Common myeloid progenitor, CD34-positive (primary cell): ENCODE measurements at regions of chr9 and their contacts with region 1.

Region 1: GRCh38 chr9:90827181-90827871 is 25.7 kb downstream of the SYK start:
- DNase-seq: peak; percentile 64 to 91 (median 86)
- H3K4me3 ChIP-seq: peak overlapping the region in 5 of 7 experiments; percentile 29 to 56 (median 46)
- H3K27ac ChIP-seq: peak overlapping the region in 1 of 2 experiments; percentile 50
- H3K4me1 ChIP-seq: peaks cover 27 to 49% (median 43%) of the 10 kb centered on the region in 4 experiments
- H3K27me3 ChIP-seq: no peaks in the 10 kb centered on the region

Region 2: DNA sequence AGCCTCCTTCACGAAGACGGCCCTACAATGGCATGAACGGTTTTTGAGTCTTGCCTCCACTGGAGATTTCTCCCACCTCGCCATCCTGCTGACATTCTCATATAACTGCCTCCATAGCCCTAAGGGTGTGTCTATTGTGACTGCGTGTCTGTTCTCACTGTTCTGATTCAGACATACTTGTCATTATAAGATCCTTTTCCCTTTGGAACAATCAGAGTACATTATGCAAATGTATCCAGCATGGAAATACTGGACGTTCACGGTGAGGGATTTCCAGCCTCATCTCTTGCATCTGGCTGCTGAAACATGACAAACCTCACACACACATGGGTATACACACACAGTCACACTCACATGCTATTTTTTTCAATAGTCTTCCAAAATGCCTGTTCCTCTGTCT is 586.8 kb before region 1 on chr9:
- CTCF ChIA-PET with region 1: no interaction called
- POLR2A ChIA-PET with region 1: no interaction called
- DNase-seq: no peak
- H3K4me3 ChIP-seq: no peak overlapping the region
- H3K27ac ChIP-seq: no peak overlapping the region
- H3K4me1 ChIP-seq: no peaks in the 10 kb centered on the region
- H3K27me3 ChIP-seq: no peaks in the 10 kb centered on the region

Region 3: DNA sequence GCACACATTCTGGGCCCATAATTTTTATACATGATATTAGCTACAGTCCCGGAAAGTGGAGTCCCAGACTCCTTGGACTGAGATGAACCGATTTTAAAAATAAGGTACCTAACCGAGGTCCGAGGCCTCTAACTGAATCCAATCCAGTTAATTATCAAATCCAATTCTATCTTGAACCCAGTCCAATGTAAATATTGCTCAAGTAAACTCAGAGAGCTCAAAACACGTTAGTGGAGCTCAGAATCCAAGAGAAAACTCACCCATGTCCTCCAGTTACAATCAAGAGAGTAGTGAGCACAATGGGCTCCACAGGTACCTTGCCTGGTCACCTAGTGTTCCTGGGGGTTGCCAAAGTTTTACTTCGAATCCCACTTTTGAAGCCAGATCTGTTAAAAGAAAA is 146.8 kb before region 1 on chr9:
- CTCF ChIA-PET with region 1: no interaction called
- POLR2A ChIA-PET with region 1: no interaction called
- DNase-seq: no peak
- H3K4me3 ChIP-seq: no peak overlapping the region
- H3K27ac ChIP-seq: no peak overlapping the region
- H3K4me1 ChIP-seq: no peaks in the 10 kb centered on the region
- H3K27me3 ChIP-seq: peaks cover 0 to 1% (median 0%) of the 10 kb centered on the region in 5 experiments

Region 4: GRCh38 chr9:90773617-90774016 is 53.7 kb before region 1 on chr9:
- CTCF ChIA-PET with region 1: interaction called, 11 read pairs
- POLR2A ChIA-PET with region 1: no interaction called
- DNase-seq: peak; percentile 19 to 37 (median 35)
- H3K4me3 ChIP-seq: no peak overlapping the region
- H3K27ac ChIP-seq: no peak overlapping the region
- H3K4me1 ChIP-seq: peaks cover 13 to 36% (median 22%) of the 10 kb centered on the region in 4 experiments
- H3K27me3 ChIP-seq: no peaks in the 10 kb centered on the region

Region 5: DNA sequence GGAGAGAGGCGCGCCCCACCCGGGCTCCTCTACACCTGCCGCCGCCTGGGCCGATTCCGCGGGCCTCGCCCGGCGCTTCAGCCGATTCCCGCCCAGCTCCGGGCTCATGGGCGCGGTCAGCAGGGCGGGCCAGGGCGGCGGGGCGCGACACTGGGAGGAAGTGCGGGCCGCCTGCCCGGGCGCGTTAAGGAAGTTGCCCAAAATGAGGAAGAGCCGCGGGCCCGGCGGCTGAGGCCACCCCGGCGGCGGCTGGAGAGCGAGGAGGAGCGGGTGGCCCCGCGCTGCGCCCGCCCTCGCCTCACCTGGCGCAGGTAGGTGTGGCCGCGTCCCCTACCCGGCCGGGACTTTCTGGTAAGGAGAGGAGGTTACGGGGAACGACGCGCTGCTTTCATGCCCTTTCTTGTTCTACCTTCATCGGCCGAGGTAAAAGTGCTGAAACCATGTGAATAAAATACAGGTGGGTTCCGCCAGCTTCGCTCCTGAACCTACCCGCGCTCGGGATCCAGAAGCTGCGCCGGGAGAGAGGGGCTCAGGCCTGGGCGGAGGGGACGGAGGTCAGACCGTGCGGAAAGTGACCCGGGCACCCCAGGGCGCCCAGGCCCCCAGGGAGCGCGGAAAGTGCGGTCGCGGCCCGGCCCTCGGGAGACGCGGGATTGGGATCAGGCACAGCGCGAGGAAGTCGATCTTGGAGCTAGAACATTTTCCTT is 25.6 kb before region 1 on chr9 and contains the start of gene SYK:
- CTCF ChIA-PET with region 1: interaction called, 12 read pairs
- POLR2A ChIA-PET with region 1: interaction called, 3 read pairs
- DNase-seq: peak; percentile 77 to 92 (median 79)
- H3K4me3 ChIP-seq: peak within 1 kb of the TSS; percentile 64 to 97 (median 91)
- H3K27ac ChIP-seq: peak within 1 kb of the TSS; percentile 88 to 94
- H3K4me1 ChIP-seq: peaks cover 36 to 62% (median 48%) of the 10 kb centered on the region in 4 experiments
- H3K27me3 ChIP-seq: no peaks in the 10 kb centered on the region

Region 6: DNA sequence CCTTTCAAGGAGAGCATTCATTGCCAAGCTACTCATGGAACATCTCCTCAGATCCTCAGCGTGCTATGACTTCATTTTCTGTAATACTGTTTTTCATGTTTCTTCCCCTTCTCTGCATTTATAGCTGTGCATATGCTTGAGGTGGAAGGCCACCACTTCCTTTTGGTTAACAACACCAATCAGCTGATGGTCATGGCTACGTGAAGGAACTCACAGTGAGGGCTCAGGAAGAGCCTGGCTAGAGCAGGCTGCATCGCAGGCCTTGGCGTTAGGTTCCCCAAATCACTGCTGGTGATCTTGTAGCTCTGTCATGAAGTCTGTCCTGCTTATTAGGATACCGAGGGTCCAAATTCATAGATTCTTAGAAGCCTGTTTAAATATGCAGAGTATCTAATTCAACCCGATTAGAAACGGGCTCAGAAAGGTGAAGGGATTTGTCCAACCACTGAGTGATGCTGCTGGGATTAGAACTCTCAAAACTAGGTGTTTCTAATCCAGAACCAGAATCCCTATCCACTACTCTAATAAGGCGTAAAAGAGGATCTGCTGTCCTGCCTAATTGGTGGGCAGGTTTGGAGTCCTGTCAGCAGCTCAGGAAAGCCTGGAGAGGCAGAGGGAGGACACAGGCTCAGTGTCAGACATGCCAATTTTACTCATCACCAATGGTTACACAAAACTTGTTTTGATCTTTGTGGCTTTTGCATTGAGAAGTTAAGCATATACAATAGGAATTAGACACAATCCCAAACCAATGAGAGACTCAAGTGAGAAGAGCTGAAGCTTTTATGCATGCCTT is 18.2 kb before region 1 on chr9:
- CTCF ChIA-PET with region 1: interaction called, 32 read pairs
- POLR2A ChIA-PET with region 1: no interaction called
- DNase-seq: peak; percentile 27 to 92 (median 91)
- H3K4me3 ChIP-seq: peak overlapping the region in 3 of 7 experiments; percentile 37 to 58 (median 48)
- H3K27ac ChIP-seq: peak overlapping the region in 1 of 2 experiments; percentile 36
- H3K4me1 ChIP-seq: peaks cover 48 to 98% (median 89%) of the 10 kb centered on the region in 4 experiments
- H3K27me3 ChIP-seq: no peaks in the 10 kb centered on the region

Region 7: GRCh38 chr9:90815183-90815943 is 12.0 kb before region 1 on chr9:
- CTCF ChIA-PET with region 1: interaction called, 47 read pairs
- POLR2A ChIA-PET with region 1: interaction called, 14 read pairs
- DNase-seq: peak; percentile 92 to 98 (median 94)
- H3K4me3 ChIP-seq: peak overlapping the region in 5 of 7 experiments; percentile 24 to 67 (median 53)
- H3K27ac ChIP-seq: peak overlapping the region; percentile 58 to 85
- H3K4me1 ChIP-seq: peaks cover 22 to 74% (median 60%) of the 10 kb centered on the region in 4 experiments
- H3K27me3 ChIP-seq: no peaks in the 10 kb centered on the region

Region 8: GRCh38 chr9:90838100-90838499 is 10.8 kb after region 1 on chr9:
- CTCF ChIA-PET with region 1: interaction called, 32 read pairs
- POLR2A ChIA-PET with region 1: interaction called, 3 read pairs
- DNase-seq: peak in 2 of 3 donors; percentile 55 to 57
- H3K4me3 ChIP-seq: no peak overlapping the region
- H3K27ac ChIP-seq: no peak overlapping the region
- H3K4me1 ChIP-seq: peaks cover 7 to 57% (median 50%) of the 10 kb centered on the region in 4 experiments
- H3K27me3 ChIP-seq: no peaks in the 10 kb centered on the region

Region 9: DNA sequence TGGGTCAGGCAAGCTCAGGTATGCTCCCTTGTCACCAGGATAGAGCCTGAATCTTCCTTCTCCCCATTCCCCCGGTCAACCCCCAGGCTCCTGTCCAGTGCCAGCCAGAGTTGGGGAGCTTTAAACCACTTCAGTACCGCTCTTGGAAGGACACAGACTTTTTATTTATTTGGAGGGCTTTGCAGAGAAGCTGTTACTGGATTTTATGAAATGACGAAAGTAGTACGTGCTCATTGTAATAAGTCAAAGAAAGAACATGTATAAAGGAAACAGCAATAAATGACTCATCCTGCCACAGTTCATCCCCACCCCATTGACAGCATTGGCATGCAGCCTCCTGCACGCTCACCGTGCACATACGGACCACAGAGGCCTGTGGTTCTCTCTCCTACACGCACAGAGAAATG is 304.1 kb after region 1 on chr9:
- CTCF ChIA-PET with region 1: no interaction called
- POLR2A ChIA-PET with region 1: no interaction called
- DNase-seq: peak; percentile 61 to 90 (median 89)
- H3K4me3 ChIP-seq: no peak overlapping the region
- H3K27ac ChIP-seq: no peak overlapping the region
- H3K4me1 ChIP-seq: peaks cover 0 to 14% (median 5%) of the 10 kb centered on the region in 4 experiments
- H3K27me3 ChIP-seq: no peaks in the 10 kb centered on the region

Region 10: GRCh38 chr9:91162784-91163443 is 335.6 kb after region 1 on chr9:
- CTCF ChIA-PET with region 1: no interaction called
- POLR2A ChIA-PET with region 1: no interaction called
- DNase-seq: peak; percentile 43 to 76 (median 71)
- H3K4me3 ChIP-seq: peak overlapping the region in 2 of 7 experiments; percentile 14 to 23
- H3K27ac ChIP-seq: no peak overlapping the region
- H3K4me1 ChIP-seq: peaks cover 17 to 56% (median 47%) of the 10 kb centered on the region in 4 experiments
- H3K27me3 ChIP-seq: no peaks in the 10 kb centered on the region